ENCODE measurements at regions of chr5 and their contacts with region 1.

Region 1: GRCh38 chr5:91499943-91500531 is 116.9 kb upstream of the ARRDC3 start:
- DNase-seq: no peak
- H3K4me3 Mint-ChIP-seq: no peak overlapping the region
- H3K27ac Mint-ChIP-seq: no peak overlapping the region
- H3K4me1 Mint-ChIP-seq: no peaks in the 10 kb centered on the region
- H3K27me3 Mint-ChIP-seq: peaks cover 12% of the 10 kb centered on the region

Region 2: DNA sequence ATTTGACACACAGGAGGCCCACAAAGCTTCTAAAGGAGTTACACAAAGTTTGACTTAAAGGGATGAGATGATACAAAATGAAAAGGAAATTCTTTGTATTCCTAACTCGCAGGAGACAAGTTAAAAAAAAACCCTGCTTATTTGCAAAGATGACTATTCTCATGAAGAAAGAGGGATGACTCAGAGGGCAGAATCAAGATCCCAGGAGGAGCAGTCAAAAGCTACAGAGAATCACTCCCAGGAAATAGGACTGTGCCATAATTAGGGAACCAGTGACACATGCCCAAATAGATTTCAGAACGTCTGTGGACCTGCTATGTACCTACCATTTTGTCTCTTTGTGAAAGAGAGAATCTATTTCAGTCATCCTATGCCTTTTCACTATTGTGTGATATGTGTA is 13.4 kb before region 1 on chr5:
- intact Hi-C with region 1: no loop called
- DNase-seq: no peak
- H3K4me3 Mint-ChIP-seq: no peak overlapping the region
- H3K27ac Mint-ChIP-seq: no peak overlapping the region
- H3K4me1 Mint-ChIP-seq: no peaks in the 10 kb centered on the region
- H3K27me3 Mint-ChIP-seq: peaks cover 5% of the 10 kb centered on the region

Region 3: DNA sequence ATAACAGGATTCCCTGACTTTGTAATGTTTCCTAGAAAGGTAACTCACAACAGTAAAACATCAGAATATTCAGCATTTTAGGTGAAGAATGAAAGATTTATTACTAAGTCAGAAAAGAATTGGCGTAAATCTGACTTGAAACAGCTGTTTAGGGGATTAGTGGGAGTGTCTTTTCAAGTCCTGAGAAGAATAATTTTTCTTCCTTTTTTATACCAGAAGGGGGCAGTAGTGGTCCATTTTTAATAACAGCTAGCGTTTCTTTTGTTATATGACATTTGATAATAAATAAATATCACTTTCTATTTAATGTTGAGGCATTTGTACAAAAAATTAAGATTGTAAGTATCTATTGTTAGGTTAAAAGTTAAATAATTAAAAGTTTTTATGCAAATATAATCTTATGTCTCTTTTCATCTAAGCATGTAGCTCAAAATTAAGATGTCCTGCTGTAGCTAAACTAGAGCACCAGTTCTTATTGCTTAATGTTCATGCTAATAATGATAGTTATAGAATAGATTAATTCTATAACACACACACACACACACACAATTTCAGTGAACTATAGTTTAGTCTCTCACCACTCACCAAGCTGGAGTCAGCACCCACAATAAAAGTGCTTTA is 141.8 kb after region 1 on chr5:
- intact Hi-C with region 1: loop called (anchors 1 kb)
- DNase-seq: no peak
- H3K4me3 Mint-ChIP-seq: no peak overlapping the region
- H3K27ac Mint-ChIP-seq: no peak overlapping the region
- H3K4me1 Mint-ChIP-seq: no peaks in the 10 kb centered on the region
- H3K27me3 Mint-ChIP-seq: peaks cover 2% of the 10 kb centered on the region

Measured in activated T-helper 1 cell treated with anti-CD3 and anti-CD28 coated beads, Interleukin-12 subunit alpha, Interleukin-12 subunit beta, Interleukin-2, Interleukin-4 antibody, amounts not matched to agents 30 ng/mL and 10 ng/mL and 1 ng/mL, durations not matched to agents 14 hours and 24 hours and 36 hours (primary cell).